ENCODE measurements at regions of chr17 and their contacts with region 1.

Region 1: DNA sequence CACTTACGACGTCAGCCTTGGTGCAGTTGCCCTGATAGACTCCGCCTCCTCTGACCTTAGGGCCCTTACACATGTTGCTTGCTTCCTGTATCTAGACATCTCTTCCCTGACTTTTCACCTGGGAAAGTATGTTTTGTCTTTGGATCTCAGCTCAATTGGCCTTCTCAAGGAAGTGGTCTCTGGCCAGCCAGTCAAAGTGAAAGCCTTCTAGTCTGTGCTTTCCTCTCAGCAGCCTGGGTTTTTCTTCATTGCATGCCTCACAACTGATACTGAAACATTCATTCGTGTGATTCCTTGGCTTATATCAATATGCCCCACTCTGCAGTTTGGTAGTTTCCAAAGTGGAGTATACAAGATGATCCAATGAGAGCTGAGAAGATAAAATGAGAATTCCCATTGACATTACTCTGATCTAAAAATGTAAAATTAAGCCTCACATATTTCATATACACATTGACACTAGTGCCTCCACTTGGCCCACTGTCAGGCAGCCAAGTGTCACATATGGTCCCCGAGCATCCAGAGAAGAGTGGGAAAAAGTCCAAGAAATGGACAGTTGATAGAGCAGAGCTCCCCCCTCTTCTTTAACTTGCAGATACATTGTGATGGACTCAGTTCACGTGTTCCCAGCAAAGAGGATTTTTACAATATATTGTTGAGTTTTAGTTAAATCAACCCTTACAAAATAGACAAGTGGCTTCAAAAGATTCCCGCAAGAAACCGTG is 371.2 kb upstream of the ASIC2 start:
- DNase-seq: no peak
- H3K4me3 ChIP-seq: no peak overlapping the region
- H3K27ac ChIP-seq: no peak overlapping the region
- H3K4me1 ChIP-seq: no peaks in the 10 kb centered on the region
- H3K27me3 ChIP-seq: no peaks in the 10 kb centered on the region
- CTCF ChIP-seq: no peak
- POLR2A ChIP-seq: no peak

Region 2: GRCh38 chr17:33192951-33193911 is 471.0 kb before region 1 on chr17:
- intact Hi-C with region 1: loop called (anchors 5 kb)
- DNase-seq: no peak
- H3K4me3 ChIP-seq: no peak overlapping the region
- H3K27ac ChIP-seq: no peak overlapping the region
- H3K4me1 ChIP-seq: no peaks in the 10 kb centered on the region
- H3K27me3 ChIP-seq: no peaks in the 10 kb centered on the region
- CTCF ChIP-seq: no peak
- POLR2A ChIP-seq: no peak

Region 3: DNA sequence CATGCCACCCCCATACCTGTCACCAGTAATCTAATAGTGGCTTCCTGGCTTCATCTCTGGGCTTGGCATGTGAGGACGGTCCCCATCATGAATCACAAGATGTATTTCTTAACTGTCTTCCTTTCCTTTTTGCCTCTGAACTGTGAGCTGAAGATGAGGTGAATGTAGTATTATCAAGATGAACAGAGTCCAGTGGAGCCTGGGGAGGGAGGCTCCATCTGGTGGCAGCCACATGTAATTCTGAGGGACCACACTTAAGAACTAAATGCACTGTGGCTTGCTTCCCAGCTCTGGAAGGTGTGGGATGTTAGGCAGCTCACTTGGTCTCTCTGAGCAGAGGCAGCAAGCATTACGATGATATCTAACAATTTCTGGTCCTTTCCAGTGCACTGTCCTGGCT is 16.3 kb before region 1 on chr17:
- intact Hi-C with region 1: no loop called
- DNase-seq: peak in 1 of 2 donors; percentile 24
- H3K4me3 ChIP-seq: no peak overlapping the region
- H3K27ac ChIP-seq: no peak overlapping the region
- H3K4me1 ChIP-seq: no peaks in the 10 kb centered on the region
- H3K27me3 ChIP-seq: no peaks in the 10 kb centered on the region
- CTCF ChIP-seq: peak; percentile 8 to 42 (median 25)
- POLR2A ChIP-seq: no peak

Region 4: GRCh38 chr17:33732116-33732515 is 67.8 kb after region 1 on chr17:
- intact Hi-C with region 1: no loop called
- DNase-seq: no peak
- H3K4me3 ChIP-seq: no peak overlapping the region
- H3K27ac ChIP-seq: no peak overlapping the region
- H3K4me1 ChIP-seq: no peaks in the 10 kb centered on the region
- H3K27me3 ChIP-seq: peaks cover 0 to 32% of the 10 kb centered on the region in 2 donors
- CTCF ChIP-seq: no peak
- POLR2A ChIP-seq: no peak